Prostate gland (tissue), 2 donors: ENCODE measurements at regions of chr12 and their contacts with region 1.

Region 1: DNA sequence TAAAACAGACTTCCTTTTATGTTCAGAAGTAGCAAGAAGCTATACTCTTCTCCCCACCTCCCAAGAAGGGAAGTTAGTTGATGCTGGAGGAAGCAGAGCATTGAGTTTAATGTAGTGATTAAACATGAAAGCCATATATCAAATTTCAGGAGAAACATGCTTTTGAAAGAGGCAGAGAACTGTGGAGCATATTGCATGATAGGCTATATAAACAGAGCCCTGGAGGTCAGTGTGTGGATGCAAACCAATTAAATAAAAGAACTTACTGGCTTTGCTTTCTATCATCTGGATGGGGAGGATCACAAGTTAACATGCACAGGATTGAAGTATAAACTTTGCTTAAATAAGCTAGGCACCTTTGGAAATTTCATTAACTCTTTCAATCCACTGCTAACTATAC is 94.1 kb downstream of the MSRB3 start:
- DNase-seq: no peak
- H3K4me3 ChIP-seq: no peak overlapping the region
- H3K27ac ChIP-seq: no peak overlapping the region
- H3K4me1 ChIP-seq: no peaks in the 10 kb centered on the region
- H3K27me3 ChIP-seq: no peaks in the 10 kb centered on the region
- CTCF ChIP-seq: no peak
- POLR2A ChIP-seq: no peak

Region 2: GRCh38 chr12:64650762-64651161 is 721.8 kb before region 1 on chr12:
- intact Hi-C with region 1: no loop called
- DNase-seq: peak; percentile 66
- H3K4me3 ChIP-seq: no peak overlapping the region
- H3K27ac ChIP-seq: no peak overlapping the region
- H3K4me1 ChIP-seq: no peaks in the 10 kb centered on the region
- H3K27me3 ChIP-seq: no peaks in the 10 kb centered on the region
- CTCF ChIP-seq: no peak
- POLR2A ChIP-seq: no peak

Region 3: GRCh38 chr12:65798918-65799317 is 426.3 kb after region 1 on chr12:
- intact Hi-C with region 1: loop called (anchors 10 kb)
- DNase-seq: no peak
- H3K4me3 ChIP-seq: no peak overlapping the region
- H3K27ac ChIP-seq: no peak overlapping the region
- H3K4me1 ChIP-seq: no peaks in the 10 kb centered on the region
- H3K27me3 ChIP-seq: no peaks in the 10 kb centered on the region
- CTCF ChIP-seq: no peak
- POLR2A ChIP-seq: no peak

Region 4: GRCh38 chr12:65918021-65918420 is 545.4 kb after region 1 on chr12:
- intact Hi-C with region 1: no loop called
- DNase-seq: no peak
- H3K4me3 ChIP-seq: no peak overlapping the region
- H3K27ac ChIP-seq: no peak overlapping the region
- H3K4me1 ChIP-seq: no peaks in the 10 kb centered on the region
- H3K27me3 ChIP-seq: no peaks in the 10 kb centered on the region
- CTCF ChIP-seq: no peak
- POLR2A ChIP-seq: no peak